Activated T-helper 1 cell treated with anti-CD3 and anti-CD28 coated beads, Interleukin-12 subunit alpha, Interleukin-12 subunit beta, Interleukin-2, Interleukin-4 antibody, amounts not matched to agents 30 ng/mL and 10 ng/mL and 1 ng/mL, durations not matched to agents 14 hours and 24 hours and 36 hours (primary cell): ENCODE measurements at regions of chr5 and their contacts with region 1.

Region 1: GRCh38 chr5:140346348-140347101 is at the start of gene HBEGF:
- DNase-seq: peak; percentile 55
- H3K4me3 Mint-ChIP-seq: peak within 1 kb of the TSS; percentile 87
- H3K27ac Mint-ChIP-seq: peak within 1 kb of the TSS; percentile 99
- H3K4me1 Mint-ChIP-seq: peaks cover 77% of the 10 kb centered on the region
- H3K27me3 Mint-ChIP-seq: peaks cover 1% of the 10 kb centered on the region
- total RNA-seq, gene HBEGF: 28.5 and 28.9 TPM in 2 replicates

Region 2: GRCh38 chr5:140131967-140132409 is 214.5 kb before region 1 on chr5:
- intact Hi-C with region 1: no loop called
- DNase-seq: no peak
- H3K4me3 Mint-ChIP-seq: no peak overlapping the region
- H3K27ac Mint-ChIP-seq: no peak overlapping the region
- H3K4me1 Mint-ChIP-seq: peaks cover 19% of the 10 kb centered on the region
- H3K27me3 Mint-ChIP-seq: peaks cover 9% of the 10 kb centered on the region

Region 3: DNA sequence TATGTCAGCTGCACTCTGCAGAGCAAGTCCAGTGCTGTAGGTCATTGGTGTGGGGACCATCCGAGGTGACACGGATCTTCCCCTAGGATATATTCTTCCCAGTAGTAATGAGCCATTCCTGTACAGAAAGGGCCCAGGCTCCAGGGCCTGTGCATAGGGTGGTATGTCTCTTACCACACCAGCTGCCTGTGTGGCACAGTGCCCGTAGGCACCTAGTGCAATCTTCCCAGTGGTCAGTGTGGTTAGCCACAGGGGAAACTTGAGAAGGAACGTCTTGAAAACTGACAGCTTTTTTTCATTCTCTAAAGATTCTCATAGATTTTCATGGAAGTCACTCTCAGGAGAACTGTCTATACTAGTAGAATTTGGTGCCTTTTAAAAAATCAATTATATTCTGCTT is 131.7 kb before region 1 on chr5:
- intact Hi-C with region 1: no loop called
- DNase-seq: no peak
- H3K4me3 Mint-ChIP-seq: no peak overlapping the region
- H3K27ac Mint-ChIP-seq: no peak overlapping the region
- H3K4me1 Mint-ChIP-seq: peaks cover 12% of the 10 kb centered on the region
- H3K27me3 Mint-ChIP-seq: no peaks in the 10 kb centered on the region

Region 4: DNA sequence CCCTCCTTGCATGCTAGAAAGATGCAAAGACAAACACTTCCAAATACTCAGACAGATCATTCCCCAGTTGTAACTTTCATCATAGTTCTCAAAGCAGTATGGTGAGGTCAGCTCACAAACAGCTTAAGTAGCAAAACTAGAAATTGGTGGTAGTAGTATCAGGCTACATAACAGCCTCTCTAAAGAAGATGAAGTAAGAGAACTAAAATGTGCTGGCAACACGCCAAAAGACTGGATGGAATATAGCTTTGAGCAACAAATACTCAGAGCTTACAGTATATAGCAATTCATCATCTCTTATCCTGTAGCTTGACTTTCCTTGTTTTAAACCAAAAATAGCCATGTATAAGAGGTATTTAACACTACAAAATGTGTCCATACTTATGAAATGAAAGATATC is 51.1 kb before region 1 on chr5:
- intact Hi-C with region 1: no loop called
- DNase-seq: no peak
- H3K4me3 Mint-ChIP-seq: no peak overlapping the region
- H3K27ac Mint-ChIP-seq: no peak overlapping the region
- H3K4me1 Mint-ChIP-seq: peaks cover 71% of the 10 kb centered on the region
- H3K27me3 Mint-ChIP-seq: no peaks in the 10 kb centered on the region

Region 5: GRCh38 chr5:140357726-140358093 is 11.2 kb after region 1 on chr5:
- intact Hi-C with region 1: loop called (anchors 1 kb)
- DNase-seq: peak; percentile 71
- H3K4me3 Mint-ChIP-seq: peak overlapping the region; percentile 74
- H3K27ac Mint-ChIP-seq: no peak overlapping the region
- H3K4me1 Mint-ChIP-seq: peaks cover 17% of the 10 kb centered on the region
- H3K27me3 Mint-ChIP-seq: peaks cover 4% of the 10 kb centered on the region